OCI-LY7 (cell line): ENCODE measurements at regions of chr15 and their contacts with region 1.

Region 1: DNA sequence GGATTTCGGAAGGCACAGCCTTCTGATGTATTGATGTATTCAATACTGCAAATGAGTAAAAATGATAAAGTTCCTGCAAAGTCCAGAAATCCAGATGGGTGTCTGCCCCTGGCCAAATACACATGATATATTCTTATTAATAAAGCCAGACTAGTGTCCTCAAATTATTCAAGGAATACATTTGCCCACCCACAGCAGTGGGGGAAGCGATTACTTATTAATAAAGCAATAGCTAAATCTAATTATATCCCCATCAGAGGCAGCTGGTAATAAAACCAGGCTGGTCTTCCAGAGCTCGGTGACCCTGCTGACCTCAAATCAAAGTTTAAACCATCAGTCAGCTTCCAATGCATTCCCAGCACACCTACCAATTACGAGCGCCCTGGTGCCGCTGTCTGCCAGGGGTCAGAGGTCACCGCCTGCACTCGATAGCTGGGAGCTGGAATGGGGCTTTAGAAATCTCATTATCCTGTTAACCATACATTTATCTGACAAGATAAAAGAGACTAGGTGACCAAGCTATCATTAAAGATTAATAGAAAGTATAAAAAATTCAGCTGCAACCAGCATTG is 330.3 kb downstream of the UACA start:
- DNase-seq: no peak
- H3K4me3 ChIP-seq: no peak overlapping the region
- H3K27ac ChIP-seq: no peak overlapping the region
- H3K4me1 ChIP-seq: peaks cover 32% of the 10 kb centered on the region
- CTCF ChIP-seq: no peak

Region 2: GRCh38 chr15:70278666-70279065 is 154.3 kb before region 1 on chr15:
- CTCF ChIA-PET with region 1: interaction called, 11 read pairs
- POLR2A ChIA-PET with region 1: no interaction called
- intact Hi-C with region 1: no loop called
- DNase-seq: no peak
- H3K4me3 ChIP-seq: no peak overlapping the region
- H3K27ac ChIP-seq: no peak overlapping the region
- H3K4me1 ChIP-seq: peaks cover 10% of the 10 kb centered on the region
- CTCF ChIP-seq: no peak